HAP-1 (cell line): ENCODE measurements at regions of chr14 and their contacts with region 1.

Region 1: DNA sequence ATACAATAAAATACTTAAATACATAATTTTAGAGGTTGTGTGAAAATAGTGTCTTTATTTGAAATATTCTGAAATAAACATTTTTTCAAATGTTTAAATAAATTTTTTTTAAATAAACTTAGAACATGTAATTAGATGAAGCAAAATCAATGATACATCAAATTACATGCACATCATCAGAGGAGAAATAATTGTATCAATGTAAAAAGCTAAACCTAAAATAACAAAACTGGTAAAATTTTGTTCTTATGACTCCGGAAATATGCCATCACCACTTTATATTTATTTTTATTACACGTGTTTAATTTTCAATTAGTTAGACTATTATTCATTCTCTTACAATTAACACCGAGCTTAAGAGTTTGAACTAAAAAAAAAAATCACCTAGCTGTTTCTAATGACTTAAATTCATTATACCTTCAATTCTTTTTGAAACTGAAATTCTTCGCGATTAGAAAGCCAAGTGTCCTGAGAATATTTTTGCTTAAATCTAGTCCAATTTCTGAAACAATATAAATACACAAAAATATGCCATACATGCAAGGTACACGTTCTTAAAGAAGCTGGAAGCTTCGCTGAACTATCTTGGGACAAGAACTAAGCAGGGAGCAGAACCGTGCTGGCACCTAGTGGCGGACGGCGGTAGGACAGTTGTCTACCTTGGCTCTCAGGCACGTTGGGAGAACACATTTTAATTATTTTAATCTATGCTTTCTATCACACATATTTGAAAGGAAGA is 230.5 kb downstream of the SLC25A21 start:
- DNase-seq: peak; percentile 32 to 83
- H3K4me3 ChIP-seq: no peak overlapping the region
- H3K4me1 ChIP-seq: peaks cover 7% of the 10 kb centered on the region
- H3K27me3 ChIP-seq: peaks cover 13% of the 10 kb centered on the region

Region 2: DNA sequence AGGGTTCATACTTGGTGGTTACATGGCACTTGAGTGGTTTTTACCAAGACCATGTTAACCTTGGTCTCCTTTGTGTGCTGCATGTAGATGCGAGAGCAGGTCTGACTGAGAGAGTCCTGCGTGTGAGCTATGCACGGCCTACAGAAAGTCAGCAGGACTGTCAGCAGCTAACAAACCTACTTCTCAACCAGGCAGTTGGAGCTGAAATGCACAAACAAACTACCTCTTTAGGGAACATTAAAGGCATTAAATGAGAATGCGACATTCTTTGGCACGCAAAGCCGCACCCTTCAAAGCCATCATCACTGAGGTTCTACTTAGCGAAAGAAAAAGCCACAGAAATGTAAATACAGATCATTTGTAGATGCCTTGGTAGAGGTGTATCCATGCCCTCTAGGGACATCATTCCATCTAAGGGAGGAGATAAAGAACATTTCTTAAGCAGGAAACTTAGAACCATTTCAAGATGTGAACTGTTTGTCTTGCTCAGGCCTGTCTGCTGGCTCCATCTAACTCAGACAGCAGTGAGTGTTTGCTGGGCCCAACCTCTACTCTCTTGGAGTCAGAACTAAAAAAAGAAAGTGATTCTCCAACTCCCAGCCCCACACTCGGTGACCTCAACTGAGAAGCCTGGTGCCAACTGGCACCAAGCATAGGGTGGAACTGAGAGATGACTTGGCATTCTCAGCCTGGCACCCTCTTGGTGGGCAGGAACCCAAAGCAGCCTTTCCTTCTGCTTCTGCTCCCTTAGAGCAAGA is 558.1 kb before region 1 on chr14:
- in situ Hi-C with region 1: loop called (anchors 25 kb)
- DNase-seq: peak; percentile 13 to 20
- H3K4me3 ChIP-seq: no peak overlapping the region
- H3K4me1 ChIP-seq: no peaks in the 10 kb centered on the region; the same call in 1 of the 2 replicates
- H3K27me3 ChIP-seq: no peaks in the 10 kb centered on the region